Activated CD4-positive, alpha-beta T cell treated with anti-CD3 and anti-CD28 coated beads, Interleukin-2, amount 10 ng/mL, durations not matched to agents 24 days and 14 days (primary cell): ENCODE measurements at regions of chr21 and their contacts with region 1.

Region 1: GRCh38 chr21:32770871-32771523 is 558 bp downstream of the PAXBP1 start:
- DNase-seq: peak; percentile 88
- H3K4me3 Mint-ChIP-seq: peak overlapping the region; percentile 99
- H3K27ac Mint-ChIP-seq: peak overlapping the region; percentile 92
- H3K4me1 Mint-ChIP-seq: peaks cover 46% of the 10 kb centered on the region
- H3K27me3 Mint-ChIP-seq: peaks cover 3% of the 10 kb centered on the region

Region 2: DNA sequence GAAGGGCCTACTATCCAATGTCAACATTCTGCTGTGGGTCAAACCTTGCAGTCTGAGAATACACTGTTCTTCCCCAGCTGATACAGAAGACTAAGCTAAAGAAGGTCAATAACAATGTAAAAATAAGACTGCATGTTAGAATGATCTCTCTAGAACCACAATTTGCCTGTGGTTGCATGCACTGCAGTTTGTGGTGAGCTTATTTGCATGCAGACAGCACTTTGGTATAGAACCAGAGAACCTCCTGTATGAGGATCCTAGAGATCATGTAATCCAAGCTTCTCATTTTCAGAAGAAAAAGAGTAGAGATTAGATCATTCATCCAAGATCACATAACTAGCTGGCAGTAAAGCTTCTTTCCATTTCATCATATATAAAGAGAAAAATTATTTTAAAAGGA is 59.0 kb before region 1 on chr21:
- intact Hi-C with region 1: no loop called
- DNase-seq: peak; percentile 77
- H3K4me3 Mint-ChIP-seq: peak overlapping the region; percentile 24
- H3K27ac Mint-ChIP-seq: no peak overlapping the region
- H3K4me1 Mint-ChIP-seq: peaks cover 15% of the 10 kb centered on the region
- H3K27me3 Mint-ChIP-seq: no peaks in the 10 kb centered on the region

Region 3: DNA sequence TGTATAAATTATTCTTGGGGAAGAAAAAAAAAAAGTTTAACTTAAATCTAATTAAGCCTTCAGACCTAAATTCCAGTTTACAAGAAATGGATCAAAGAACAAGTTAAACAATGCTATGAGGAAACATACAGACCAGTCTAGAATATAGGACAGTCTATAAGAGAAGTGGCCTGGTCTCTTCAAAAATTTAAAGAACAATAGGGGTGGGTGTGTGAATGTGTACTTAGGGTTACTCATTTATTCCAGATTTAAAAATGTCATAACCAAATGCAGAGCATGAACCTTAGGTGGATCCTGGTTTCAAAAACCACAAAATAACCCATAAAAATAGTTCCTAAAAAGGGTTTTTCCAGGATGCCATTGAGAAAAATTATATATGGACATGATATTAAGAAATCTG is 21.3 kb before region 1 on chr21:
- intact Hi-C with region 1: loop called (anchors 2 kb)
- DNase-seq: no peak
- H3K4me3 Mint-ChIP-seq: no peak overlapping the region
- H3K27ac Mint-ChIP-seq: peak overlapping the region; percentile 58
- H3K4me1 Mint-ChIP-seq: peaks cover 24% of the 10 kb centered on the region
- H3K27me3 Mint-ChIP-seq: no peaks in the 10 kb centered on the region